SK-N-SH (cell line): ENCODE measurements at regions of chr7 and their contacts with region 1.

Region 1: GRCh38 chr7:11343818-11344413 is 370.2 kb downstream of the PHF14 start:
- DNase-seq: peak; percentile 22
- H3K4me3 ChIP-seq: peak overlapping the region in 1 of 2 experiments; percentile 32; a peak in 1 of 4 replicates
- H3K27ac ChIP-seq: no peak overlapping the region
- H3K4me1 ChIP-seq: peaks cover 0 to 3% of the 10 kb centered on the region in 2 experiments; a peak in 2 of 4 replicates
- H3K27me3 ChIP-seq: no peaks in the 10 kb centered on the region
- CTCF ChIP-seq: peak; percentile 95
- EP300 ChIP-seq: 0 out of 4 replicates have a peak, but pooled peaks of 1 of the 2 experiments have one; percentile 5
- RAD21 ChIP-seq: peak; percentile 93

Region 2: GRCh38 chr7:11332186-11332864 is 11.6 kb before region 1 on chr7:
- CTCF ChIA-PET with region 1: interaction called, 13 read pairs
- POLR2A ChIA-PET with region 1: no interaction called
- DNase-seq: no peak
- H3K4me3 ChIP-seq: no peak overlapping the region
- H3K27ac ChIP-seq: no peak overlapping the region
- H3K4me1 ChIP-seq: no peaks in the 10 kb centered on the region
- H3K27me3 ChIP-seq: no peaks in the 10 kb centered on the region
- CTCF ChIP-seq: no peak
- EP300 ChIP-seq: no peak
- RAD21 ChIP-seq: no peak

Region 3: GRCh38 chr7:11355399-11356005 is 11.6 kb after region 1 on chr7:
- CTCF ChIA-PET with region 1: interaction called, 58 read pairs
- POLR2A ChIA-PET with region 1: no interaction called
- DNase-seq: no peak
- H3K4me3 ChIP-seq: no peak overlapping the region
- H3K27ac ChIP-seq: no peak overlapping the region
- H3K4me1 ChIP-seq: peaks cover 0 to 2% of the 10 kb centered on the region in 2 experiments; a peak in 1 of 4 replicates
- H3K27me3 ChIP-seq: no peaks in the 10 kb centered on the region
- CTCF ChIP-seq: no peak
- EP300 ChIP-seq: no peak
- RAD21 ChIP-seq: no peak